Activated CD8-positive, alpha-beta T cell treated with anti-CD3 and anti-CD28 coated beads, Interleukin-2, amount 10 ng/mL, durations not matched to agents 7 days and 5 days (primary cell): ENCODE measurements at regions of chr14 and their contacts with region 1.

Region 1: GRCh38 chr14:22122227-22122818 is 448.7 kb upstream of the OR4E1 start:
- DNase-seq: peak; percentile 45
- ATAC-seq: peak; percentile 50
- H3K4me3 Mint-ChIP-seq: peak overlapping the region; percentile 79
- H3K27ac Mint-ChIP-seq: peak overlapping the region; percentile 84
- H3K4me1 Mint-ChIP-seq: peaks cover 17% of the 10 kb centered on the region
- H3K27me3 Mint-ChIP-seq: peaks cover 5% of the 10 kb centered on the region

Region 2: DNA sequence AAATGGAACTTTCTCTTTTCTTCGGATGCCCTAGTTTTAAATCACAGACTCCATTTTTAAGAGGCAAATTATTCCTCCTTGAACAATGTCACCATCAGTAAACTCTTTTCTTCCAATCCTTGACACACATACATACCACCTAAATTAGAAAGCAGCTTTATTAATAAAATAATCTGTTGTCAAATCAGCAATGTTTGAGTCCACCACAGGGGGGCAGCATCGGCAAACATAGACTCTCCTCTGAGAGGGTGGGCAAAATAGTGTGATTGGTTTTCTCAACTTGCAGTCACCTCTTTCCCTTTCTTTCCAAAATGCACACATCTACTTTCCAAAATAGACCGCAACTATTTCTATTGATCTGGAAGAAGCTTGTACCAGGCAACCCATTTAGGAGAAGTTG is 10.3 kb before region 1 on chr14:
- CTCF ChIA-PET with region 1: interaction called, 16 read pairs
- POLR2A ChIA-PET with region 1: interaction called, 6 read pairs
- DNase-seq: peak; percentile 61
- ATAC-seq: no peak
- H3K4me3 Mint-ChIP-seq: peak overlapping the region; percentile 68
- H3K27ac Mint-ChIP-seq: peak overlapping the region; percentile 81
- H3K4me1 Mint-ChIP-seq: peaks cover 33% of the 10 kb centered on the region
- H3K27me3 Mint-ChIP-seq: no peaks in the 10 kb centered on the region

Region 3: GRCh38 chr14:22152903-22153302 is 30.6 kb after region 1 on chr14:
- CTCF ChIA-PET with region 1: no interaction called
- POLR2A ChIA-PET with region 1: no interaction called
- DNase-seq: no peak
- ATAC-seq: peak; percentile 57
- H3K4me3 Mint-ChIP-seq: no peak overlapping the region
- H3K27ac Mint-ChIP-seq: no peak overlapping the region
- H3K4me1 Mint-ChIP-seq: peaks cover 14% of the 10 kb centered on the region
- H3K27me3 Mint-ChIP-seq: no peaks in the 10 kb centered on the region